ENCODE measurements at regions of chr6 and their contacts with region 1.

Region 1: GRCh38 chr6:26025894-26026832 is 61.1 kb upstream of the HFE start:
- DNase-seq: peak; percentile 59
- H3K4me3 ChIP-seq: peak overlapping the region; percentile 70 to 89
- H3K27ac ChIP-seq: peak overlapping the region; percentile 92 to 99
- H3K4me1 ChIP-seq: peaks cover 15 to 34% of the 10 kb centered on the region in 2 experiments; a peak in 3 of 4 replicates
- H3K27me3 ChIP-seq: no peaks in the 10 kb centered on the region
- CTCF ChIP-seq: peak; percentile 91
- EP300 ChIP-seq: peak in 1 of 2 experiments; percentile 22; a peak in 1 of 4 replicates
- RAD21 ChIP-seq: peak; percentile 24; the same call in 1 of the 2 replicates

Region 2: DNA sequence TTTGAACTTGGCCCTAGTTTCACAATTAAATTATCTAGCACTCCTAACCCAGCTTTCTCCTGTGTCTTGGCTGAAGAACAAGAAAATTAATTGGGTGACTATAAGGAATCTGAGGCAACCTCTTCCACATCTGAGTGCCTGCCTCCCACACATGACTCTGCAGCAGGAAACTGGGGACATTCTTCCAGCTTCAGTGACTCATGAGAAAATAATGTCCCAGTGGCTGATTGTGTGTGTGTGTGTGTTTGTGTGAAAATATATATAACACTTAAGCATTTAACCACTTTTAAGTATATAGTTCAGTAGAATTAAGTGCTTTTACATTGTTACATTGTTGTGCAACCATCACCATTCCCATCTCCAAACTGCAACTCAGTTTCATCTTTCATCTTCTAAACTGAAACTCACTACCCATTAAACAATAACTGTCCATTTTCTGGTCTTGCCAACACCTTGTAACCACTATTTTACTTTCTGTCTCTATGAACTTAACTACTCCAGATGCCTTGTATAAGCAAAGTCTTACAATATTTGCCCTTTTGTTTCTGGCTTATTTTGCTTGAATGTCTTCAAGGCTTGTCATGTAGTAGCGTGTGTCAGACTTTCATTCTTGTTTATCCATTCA is 54.9 kb before region 1 on chr6:
- CTCF ChIA-PET with region 1: no interaction called
- POLR2A ChIA-PET with region 1: no interaction called
- DNase-seq: no peak
- H3K4me3 ChIP-seq: no peak overlapping the region
- H3K27ac ChIP-seq: peak overlapping the region in 1 of 2 experiments; percentile 53; a peak in 3 of 4 replicates
- H3K4me1 ChIP-seq: peaks cover 0 to 16% of the 10 kb centered on the region in 2 experiments; a peak in 2 of 4 replicates
- H3K27me3 ChIP-seq: no peaks in the 10 kb centered on the region
- CTCF ChIP-seq: no peak
- EP300 ChIP-seq: no peak
- RAD21 ChIP-seq: no peak

Region 3: GRCh38 chr6:25992413-25993037 is 33.6 kb before region 1 on chr6:
- CTCF ChIA-PET with region 1: interaction called, 28 read pairs
- POLR2A ChIA-PET with region 1: interaction called, 67 read pairs
- DNase-seq: peak; percentile 94
- H3K4me3 ChIP-seq: peak overlapping the region; percentile 53 to 78
- H3K27ac ChIP-seq: peak overlapping the region; percentile 89 to 98
- H3K4me1 ChIP-seq: peaks cover 6 to 8% of the 10 kb centered on the region in 2 experiments; a peak in 3 of 4 replicates
- H3K27me3 ChIP-seq: no peaks in the 10 kb centered on the region
- CTCF ChIP-seq: peak; percentile 96
- EP300 ChIP-seq: no peak
- RAD21 ChIP-seq: peak; percentile 60

Region 4: GRCh38 chr6:26054857-26055669 is 28.9 kb after region 1 on chr6:
- CTCF ChIA-PET with region 1: interaction called, 3 read pairs
- POLR2A ChIA-PET with region 1: interaction called, 16 read pairs
- DNase-seq: peak; percentile 57
- H3K4me3 ChIP-seq: peak overlapping the region; percentile 79 to 80
- H3K27ac ChIP-seq: peak overlapping the region; percentile 97 to 98
- H3K4me1 ChIP-seq: peaks cover 0 to 7% of the 10 kb centered on the region in 2 experiments; a peak in 3 of 4 replicates
- H3K27me3 ChIP-seq: no peaks in the 10 kb centered on the region
- CTCF ChIP-seq: no peak
- EP300 ChIP-seq: no peak; a peak in 1 of 4 replicates
- RAD21 ChIP-seq: no peak

Region 5: DNA sequence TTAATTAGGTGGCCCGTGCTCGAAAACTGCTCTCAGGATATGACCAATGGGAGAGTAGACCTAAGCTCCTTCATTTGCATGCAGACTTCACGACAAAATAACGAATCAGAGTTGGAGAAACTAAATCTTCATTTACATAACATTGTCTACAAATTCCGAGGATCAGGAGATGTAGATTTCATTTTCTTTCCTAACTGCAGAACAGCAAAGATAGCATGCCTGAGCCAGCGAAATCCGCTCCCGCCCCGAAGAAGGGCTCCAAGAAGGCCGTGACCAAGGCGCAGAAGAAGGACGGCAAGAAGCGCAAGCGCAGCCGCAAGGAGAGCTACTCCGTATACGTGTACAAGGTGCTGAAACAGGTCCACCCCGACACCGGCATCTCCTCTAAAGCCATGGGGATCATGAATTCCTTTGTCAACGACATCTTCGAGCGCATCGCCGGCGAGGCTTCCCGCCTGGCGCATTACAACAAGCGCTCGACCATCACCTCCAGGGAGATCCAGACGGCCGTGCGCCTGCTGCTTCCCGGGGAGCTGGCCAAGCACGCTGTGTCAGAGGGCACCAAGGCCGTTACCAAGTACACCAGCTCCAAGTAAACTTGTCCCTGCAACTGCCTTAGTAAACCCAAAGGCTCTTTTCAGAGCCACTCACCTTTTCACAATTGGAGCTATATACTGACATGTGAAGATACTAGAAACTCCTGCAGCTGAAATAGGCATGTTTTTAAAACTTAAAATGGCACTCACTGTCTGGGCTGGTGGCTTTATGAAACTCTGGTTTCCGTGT is 157.6 kb after region 1 on chr6:
- CTCF ChIA-PET with region 1: no interaction called
- POLR2A ChIA-PET with region 1: interaction called, 27 read pairs
- DNase-seq: peak; percentile 71
- H3K4me3 ChIP-seq: peak overlapping the region; percentile 49 to 56
- H3K27ac ChIP-seq: peak overlapping the region; percentile 62 to 97
- H3K4me1 ChIP-seq: peaks cover 4 to 6% of the 10 kb centered on the region in 2 experiments; a peak in 2 of 4 replicates
- H3K27me3 ChIP-seq: no peaks in the 10 kb centered on the region
- CTCF ChIP-seq: no peak
- EP300 ChIP-seq: peak in 1 of 2 experiments; percentile 39; a peak in 1 of 4 replicates
- RAD21 ChIP-seq: no peak

Region 6: DNA sequence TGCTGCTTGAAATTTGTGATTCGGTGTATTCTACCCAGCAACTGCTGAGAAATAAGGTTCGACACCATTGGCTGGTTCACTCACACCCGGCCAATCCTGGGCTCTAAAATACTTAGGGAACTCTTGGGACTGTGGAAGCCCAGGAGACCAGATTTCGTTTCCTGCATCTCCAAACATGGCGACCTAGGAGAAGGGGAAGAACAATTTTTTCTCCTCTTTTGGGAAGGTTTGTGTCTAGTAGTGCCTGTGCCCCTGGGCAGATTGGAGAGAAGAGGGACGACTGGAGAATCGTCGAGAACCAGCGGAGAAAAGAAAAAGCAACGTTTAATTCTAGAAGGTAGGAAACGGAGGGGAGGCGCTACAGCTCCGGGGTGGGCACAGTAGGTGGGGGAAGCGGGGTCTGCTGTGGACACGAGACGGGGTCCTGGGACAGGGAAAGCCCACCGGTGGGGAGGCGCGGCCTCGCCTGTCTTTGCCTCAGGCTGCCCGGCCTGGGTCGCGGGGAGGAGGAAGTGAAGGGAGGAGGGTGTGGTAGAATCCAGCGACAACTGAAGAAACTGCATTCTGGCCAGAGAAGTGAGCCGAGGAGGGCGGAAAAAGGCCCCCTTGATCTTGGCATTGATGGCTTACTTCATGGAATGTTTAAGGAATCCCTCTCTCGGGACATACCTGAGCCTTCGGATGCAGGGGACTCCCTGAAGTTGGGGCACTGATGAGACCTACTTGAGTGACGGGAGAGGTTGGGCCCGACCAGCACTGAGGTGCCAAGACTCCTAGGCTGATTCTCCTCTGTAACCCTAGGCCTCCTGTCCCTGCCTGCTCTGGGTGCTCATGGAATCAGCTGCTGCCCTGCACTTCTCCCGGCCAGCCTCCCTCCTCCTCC is 431.9 kb after region 1 on chr6 and contains the start of gene BTN2A1:
- CTCF ChIA-PET with region 1: no interaction called
- POLR2A ChIA-PET with region 1: no interaction called
- DNase-seq: peak; percentile 87
- H3K4me3 ChIP-seq: peak within 1 kb of the TSS; percentile 73 to 86
- H3K27ac ChIP-seq: peak within 1 kb of the TSS; percentile 74 to 94
- H3K4me1 ChIP-seq: peaks cover 13 to 18% of the 10 kb centered on the region in 2 experiments; a peak in 1 of 4 replicates
- H3K27me3 ChIP-seq: no peaks in the 10 kb centered on the region
- CTCF ChIP-seq: peak; percentile 22; the same call in 1 of the 2 replicates
- EP300 ChIP-seq: no peak
- RAD21 ChIP-seq: no peak
- polyA plus RNA-seq, gene BTN2A1: 21.2 and 28.6 TPM in 2 replicates

Region 7: GRCh38 chr6:27049863-27050781 is 1024.0 kb after region 1 on chr6:
- CTCF ChIA-PET with region 1: no interaction called
- POLR2A ChIA-PET with region 1: no interaction called
- DNase-seq: no peak
- H3K4me3 ChIP-seq: no peak overlapping the region
- H3K27ac ChIP-seq: no peak overlapping the region
- H3K4me1 ChIP-seq: no peaks in the 10 kb centered on the region
- H3K27me3 ChIP-seq: no peaks in the 10 kb centered on the region
- CTCF ChIP-seq: no peak
- EP300 ChIP-seq: no peak
- RAD21 ChIP-seq: no peak

Region 8: GRCh38 chr6:27871924-27872638 is 1845.9 kb after region 1 on chr6:
- CTCF ChIA-PET with region 1: no interaction called
- POLR2A ChIA-PET with region 1: interaction called, 22 read pairs
- DNase-seq: peak; percentile 91
- H3K4me3 ChIP-seq: peak overlapping the region; percentile 68 to 71
- H3K27ac ChIP-seq: peak overlapping the region; percentile 80 to 97
- H3K4me1 ChIP-seq: peaks cover 0 to 10% of the 10 kb centered on the region in 2 experiments; a peak in 3 of 4 replicates
- H3K27me3 ChIP-seq: no peaks in the 10 kb centered on the region
- CTCF ChIP-seq: peak; percentile 39
- EP300 ChIP-seq: no peak
- RAD21 ChIP-seq: no peak